Heart right ventricle (tissue), 16 donors: ENCODE measurements at regions of chr15 and their contacts with region 1.

Region 1: GRCh38 chr15:47473832-47474231 is 243.5 kb upstream of the SEMA6D start:
- DNase-seq: peak; percentile 57 to 80
- ATAC-seq: peak; percentile 93 to 98 (median 96)
- H3K4me3 ChIP-seq: peak overlapping the region in 1 of 10 donors; percentile 8
- H3K27ac ChIP-seq: peak overlapping the region in 8 of 10 donors; percentile 2 to 69 (median 46)
- H3K4me1 ChIP-seq: peaks cover 0 to 35% (median 21%) of the 10 kb centered on the region in 9 donors
- H3K27me3 ChIP-seq: no peaks in the 10 kb centered on the region
- CTCF ChIP-seq: no peak

Region 2: DNA sequence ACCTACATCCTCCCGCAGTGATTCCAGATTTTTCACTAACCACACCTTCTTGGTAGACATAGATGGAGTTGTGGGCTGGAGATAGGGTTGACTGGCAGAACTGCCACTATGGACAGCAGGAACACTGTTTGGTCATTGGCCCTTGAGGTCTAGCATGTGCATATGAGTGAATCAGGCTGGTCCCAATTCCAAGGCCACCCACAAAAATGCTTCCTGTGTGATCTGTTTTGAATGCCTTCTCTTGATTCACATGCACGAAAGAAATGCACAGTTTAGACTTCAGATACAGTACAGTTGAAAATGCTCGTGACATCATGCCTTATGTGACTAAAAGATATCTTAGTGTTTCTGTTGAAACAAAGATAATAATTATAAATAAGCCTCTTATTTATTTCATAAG is 42.3 kb before region 1 on chr15:
- intact Hi-C with region 1: no loop called
- DNase-seq: no peak
- ATAC-seq: no peak
- H3K4me3 ChIP-seq: no peak overlapping the region
- H3K27ac ChIP-seq: no peak overlapping the region
- H3K4me1 ChIP-seq: peaks cover 0 to 5% (median 0%) of the 10 kb centered on the region in 9 donors
- H3K27me3 ChIP-seq: no peaks in the 10 kb centered on the region
- CTCF ChIP-seq: no peak

Region 3: DNA sequence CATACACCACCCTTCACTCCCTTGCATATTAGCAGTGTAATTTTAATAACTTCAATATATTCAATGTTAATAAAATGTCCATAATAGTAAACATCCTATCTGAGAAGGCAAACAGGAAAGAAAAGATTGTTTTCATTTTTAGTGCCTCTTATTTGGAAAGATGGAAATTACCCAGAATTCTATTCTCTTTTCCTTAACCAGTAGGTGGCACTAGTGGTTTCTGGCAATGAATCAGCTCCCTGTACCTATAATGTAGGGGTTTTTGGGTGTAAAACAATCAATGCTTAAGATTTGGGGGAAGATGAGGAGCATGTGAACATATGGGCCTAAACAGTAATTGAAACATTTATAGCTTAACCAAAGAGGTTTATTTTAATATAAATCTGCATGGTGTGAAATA is 237.8 kb after region 1 on chr15:
- intact Hi-C with region 1: loop called in 5 of 10 experiments (anchors 2 to 10 kb)
- DNase-seq: no peak
- ATAC-seq: no peak
- H3K4me3 ChIP-seq: no peak overlapping the region
- H3K27ac ChIP-seq: no peak overlapping the region
- H3K4me1 ChIP-seq: peaks cover 0 to 14% (median 9%) of the 10 kb centered on the region in 9 donors
- H3K27me3 ChIP-seq: peaks cover 0 to 25% (median 0%) of the 10 kb centered on the region in 7 donors
- CTCF ChIP-seq: peak; percentile 22 to 70 (median 54)